IMR-90 (cell line): ENCODE measurements at regions of chr16 and their contacts with region 1.

Region 1: DNA sequence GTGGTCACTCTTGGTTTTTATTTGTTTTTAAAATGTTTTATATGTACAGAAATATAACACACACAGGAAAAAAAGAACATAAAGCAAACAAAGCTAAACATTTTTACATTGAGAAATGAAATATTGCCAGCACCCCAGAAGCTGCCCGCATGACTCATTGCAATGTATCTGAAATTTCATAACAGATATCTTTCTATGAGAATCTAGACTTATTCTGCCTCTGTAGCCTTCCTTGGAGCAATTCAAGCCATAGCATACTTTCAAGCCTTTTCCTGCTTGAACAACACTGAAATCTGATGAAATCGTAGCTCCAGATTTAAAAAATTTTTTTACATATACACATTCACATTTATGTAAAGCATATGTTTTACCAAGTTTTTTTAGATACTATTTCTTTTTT is 86.9 kb downstream of the RBBP6 start:
- DNase-seq: peak; percentile 67
- ATAC-seq: peak; percentile 89
- H3K4me3 ChIP-seq: no peak overlapping the region
- H3K27ac ChIP-seq: no peak overlapping the region; the same call in 1 of the 2 replicates
- H3K4me1 ChIP-seq: peaks cover 2% of the 10 kb centered on the region; the same call in 1 of the 2 replicates
- H3K27me3 ChIP-seq: no peaks in the 10 kb centered on the region
- CTCF ChIP-seq: no peak
- POLR2A ChIP-seq: no peak
- RAD21 ChIP-seq: no peak

Region 2: GRCh38 chr16:24589997-24590396 is 36.3 kb before region 1 on chr16:
- CTCF ChIA-PET with region 1: interaction called, 4 read pairs
- POLR2A ChIA-PET with region 1: no interaction called
- dilution Hi-C with region 1: no loop called
- in situ Hi-C with region 1: no loop called
- intact Hi-C with region 1: loop called (anchors 5 kb)
- DNase-seq: no peak
- ATAC-seq: no peak
- H3K4me3 ChIP-seq: no peak overlapping the region
- H3K27ac ChIP-seq: no peak overlapping the region
- H3K4me1 ChIP-seq: peaks cover 2% of the 10 kb centered on the region; the same call in 1 of the 2 replicates
- H3K27me3 ChIP-seq: no peaks in the 10 kb centered on the region
- CTCF ChIP-seq: no peak
- POLR2A ChIP-seq: no peak
- RAD21 ChIP-seq: no peak

Region 3: GRCh38 chr16:24681809-24682511 is 55.7 kb after region 1 on chr16:
- CTCF ChIA-PET with region 1: no interaction called
- POLR2A ChIA-PET with region 1: no interaction called
- dilution Hi-C with region 1: no loop called
- in situ Hi-C with region 1: no loop called
- intact Hi-C with region 1: no loop called
- DNase-seq: peak; percentile 51
- ATAC-seq: peak; percentile 47
- H3K4me3 ChIP-seq: no peak overlapping the region
- H3K27ac ChIP-seq: peak overlapping the region; percentile 33; the same call in 1 of the 2 replicates
- H3K4me1 ChIP-seq: peaks cover 13% of the 10 kb centered on the region
- H3K27me3 ChIP-seq: no peaks in the 10 kb centered on the region
- CTCF ChIP-seq: no peak
- POLR2A ChIP-seq: no peak
- RAD21 ChIP-seq: no peak

Region 4: DNA sequence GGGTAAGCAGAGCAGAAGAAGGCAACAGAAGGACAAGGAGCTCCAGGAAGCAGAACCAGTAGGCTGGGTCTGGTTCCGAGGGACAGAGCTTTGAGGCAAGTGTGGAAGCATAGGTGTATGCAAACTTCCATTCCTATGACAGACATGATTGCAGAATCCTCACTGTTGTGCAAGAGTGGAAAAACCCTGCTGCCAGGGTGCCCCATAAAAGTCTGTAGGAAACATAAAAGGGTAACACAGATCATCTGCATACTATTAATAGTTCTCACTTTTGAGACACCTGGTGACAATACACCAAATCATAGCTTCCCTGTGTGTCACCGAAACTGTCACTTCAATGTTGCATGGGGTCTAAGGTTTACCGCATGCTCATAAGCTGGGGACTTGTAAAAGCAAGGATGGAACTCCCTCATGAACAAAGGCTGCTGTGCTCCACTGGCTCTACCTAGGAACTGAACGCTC is 349.2 kb after region 1 on chr16:
- CTCF ChIA-PET with region 1: no interaction called
- POLR2A ChIA-PET with region 1: no interaction called
- dilution Hi-C with region 1: no loop called
- in situ Hi-C with region 1: no loop called
- intact Hi-C with region 1: no loop called
- DNase-seq: peak; percentile 66
- ATAC-seq: no peak
- H3K4me3 ChIP-seq: no peak overlapping the region
- H3K27ac ChIP-seq: peak overlapping the region; percentile 97
- H3K4me1 ChIP-seq: peaks cover 27% of the 10 kb centered on the region
- H3K27me3 ChIP-seq: no peaks in the 10 kb centered on the region
- CTCF ChIP-seq: no peak
- POLR2A ChIP-seq: no peak
- RAD21 ChIP-seq: no peak